Sigmoid colon (tissue), 7 donors: ENCODE measurements at regions of chr6 and their contacts with region 1.

Region 1: DNA sequence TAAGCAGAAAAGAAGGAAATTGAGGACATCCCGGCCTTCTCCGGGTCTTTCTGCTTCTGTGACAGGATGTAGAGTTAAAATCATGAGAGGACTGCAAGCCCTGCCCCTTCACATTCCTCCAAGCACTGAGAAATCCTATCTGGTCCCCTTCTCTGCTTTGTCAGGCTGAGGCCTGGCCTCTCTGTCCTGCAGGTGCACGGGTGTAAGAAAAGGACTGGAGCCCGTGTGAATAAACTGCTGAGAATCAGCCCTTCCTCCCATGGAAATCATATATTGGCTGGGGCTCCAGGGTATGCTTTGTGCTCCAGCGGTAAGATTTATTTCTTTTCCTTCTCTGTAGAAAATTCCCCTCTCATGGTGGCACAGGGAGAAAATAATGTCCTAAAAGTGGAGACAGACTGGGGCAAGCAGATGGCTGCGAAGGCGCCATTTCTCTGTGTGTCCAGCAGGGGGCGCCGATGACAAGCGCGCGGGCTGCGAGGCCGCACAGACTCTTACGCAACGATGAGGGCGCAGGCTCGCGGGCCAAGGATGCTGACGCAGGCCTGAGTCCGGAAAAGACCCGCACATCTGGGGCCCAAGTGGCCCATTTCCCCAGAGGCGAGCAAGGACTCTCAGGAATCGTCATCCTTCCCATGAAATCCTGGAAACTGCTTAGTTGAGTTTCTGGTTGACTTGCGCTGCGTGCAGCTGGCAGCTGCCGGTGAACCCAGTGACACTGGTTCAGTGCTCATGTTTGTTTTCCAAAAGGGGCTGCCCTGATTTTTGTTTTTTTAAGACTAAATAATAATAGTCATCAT is 258.6 kb downstream of the ADGB start:
- DNase-seq: peak; percentile 95
- H3K4me3 ChIP-seq: peak overlapping the region; percentile 6 to 38 (median 35)
- H3K27ac ChIP-seq: peak overlapping the region; percentile 2 to 67 (median 62)
- H3K4me1 ChIP-seq: peaks cover 0 to 6% (median 3%) of the 10 kb centered on the region in 4 donors
- H3K27me3 ChIP-seq: no peaks in the 10 kb centered on the region
- CTCF ChIP-seq: peak; percentile 89 to 98 (median 95)
- EP300 ChIP-seq: peak in 2 of 4 donors; percentile 6 to 65
- POLR2A ChIP-seq: no peak

Region 2: GRCh38 chr6:146913842-146914488 is 56.6 kb after region 1 on chr6:
- intact Hi-C with region 1: loop called (anchors 2 kb)
- DNase-seq: peak; percentile 82
- H3K4me3 ChIP-seq: peak overlapping the region in 3 of 4 donors; percentile 20 to 39 (median 33)
- H3K27ac ChIP-seq: peak overlapping the region; percentile 74 to 89 (median 82)
- H3K4me1 ChIP-seq: peaks cover 0 to 37% (median 29%) of the 10 kb centered on the region in 4 donors
- H3K27me3 ChIP-seq: no peaks in the 10 kb centered on the region
- CTCF ChIP-seq: no peak
- EP300 ChIP-seq: peak in 1 of 4 donors; percentile 62
- POLR2A ChIP-seq: no peak

Region 3: DNA sequence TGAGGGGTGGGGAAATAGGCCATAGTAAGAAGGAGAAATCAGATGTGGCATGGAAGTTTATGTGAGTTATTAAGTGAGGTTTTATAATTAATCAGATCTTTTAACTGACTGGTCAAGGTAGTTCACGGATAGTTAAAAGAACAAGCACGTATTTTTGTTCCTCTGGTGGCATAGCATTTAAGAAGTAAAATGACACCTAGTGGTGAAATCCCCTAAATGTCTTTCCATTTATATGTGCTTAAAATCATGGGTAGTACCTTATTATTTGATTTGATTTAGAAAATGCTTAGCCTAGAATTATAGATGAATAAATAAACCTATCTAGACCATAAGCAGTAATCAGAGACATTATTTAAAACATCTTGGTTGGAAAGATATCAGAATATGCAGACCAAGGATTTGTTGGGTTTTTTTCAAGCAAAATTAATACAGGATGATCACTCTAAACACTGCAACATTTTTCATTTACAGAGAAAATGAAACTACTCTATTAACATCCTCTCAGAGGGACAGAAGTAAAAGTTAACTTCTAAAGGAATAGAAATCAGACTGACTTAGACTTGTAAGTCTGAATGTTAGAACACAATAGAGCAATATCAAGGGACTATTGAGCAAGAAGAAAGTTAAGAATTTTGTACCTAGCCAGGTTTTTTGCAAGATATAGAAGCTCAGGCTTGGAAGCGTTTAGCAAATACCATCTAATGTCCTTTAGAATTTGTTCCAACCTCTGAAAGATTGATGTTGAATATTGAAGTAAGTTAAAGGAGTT is 427.9 kb after region 1 on chr6:
- intact Hi-C with region 1: loop called (anchors 1 kb)
- DNase-seq: no peak
- H3K4me3 ChIP-seq: no peak overlapping the region
- H3K27ac ChIP-seq: peak overlapping the region in 2 of 4 donors; percentile 24 to 57
- H3K4me1 ChIP-seq: peaks cover 0 to 45% (median 34%) of the 10 kb centered on the region in 4 donors
- H3K27me3 ChIP-seq: no peaks in the 10 kb centered on the region
- CTCF ChIP-seq: peak in 3 of 4 experiments; percentile 28 to 43 (median 39)
- EP300 ChIP-seq: no peak
- POLR2A ChIP-seq: no peak